HepG2 (cell line): ENCODE measurements at regions of chr3 and their contacts with region 1.

Region 1: GRCh38 chr3:182212479-182213076 is 500.9 kb downstream of the SOX2 start:
- DNase-seq: peak; percentile 96
- ATAC-seq: peak; percentile 98
- H3K4me3 ChIP-seq: no peak overlapping the region
- H3K27ac ChIP-seq: peak overlapping the region; percentile 48
- H3K4me1 ChIP-seq: peaks cover 54% of the 10 kb centered on the region
- H3K27me3 ChIP-seq: no peaks in the 10 kb centered on the region
- CTCF ChIP-seq: no peak
- EP300 ChIP-seq: peak in 1 of 2 experiments; percentile 82; a peak in 1 of 4 replicates
- POLR2A ChIP-seq: no peak
- RAD21 ChIP-seq: no peak

Region 2: GRCh38 chr3:182182531-182182968 is 30.0 kb before region 1 on chr3:
- CTCF ChIA-PET with region 1: no interaction called
- POLR2A ChIA-PET with region 1: no interaction called
- in situ Hi-C with region 1: no loop called
- intact Hi-C with region 1: no loop called
- DNase-seq: peak; percentile 7
- ATAC-seq: no peak
- H3K4me3 ChIP-seq: no peak overlapping the region
- H3K27ac ChIP-seq: no peak overlapping the region
- H3K4me1 ChIP-seq: peaks cover 7% of the 10 kb centered on the region; the same call in 1 of the 2 replicates
- H3K27me3 ChIP-seq: no peaks in the 10 kb centered on the region
- CTCF ChIP-seq: no peak
- EP300 ChIP-seq: no peak
- POLR2A ChIP-seq: no peak
- RAD21 ChIP-seq: no peak

Region 3: GRCh38 chr3:182241766-182242488 is 29.3 kb after region 1 on chr3:
- CTCF ChIA-PET with region 1: no interaction called
- POLR2A ChIA-PET with region 1: interaction called, 4 read pairs
- in situ Hi-C with region 1: no loop called
- intact Hi-C with region 1: loop called (anchors 1 kb)
- DNase-seq: peak; percentile 9
- ATAC-seq: no peak
- H3K4me3 ChIP-seq: no peak overlapping the region
- H3K27ac ChIP-seq: no peak overlapping the region
- H3K4me1 ChIP-seq: peaks cover 43% of the 10 kb centered on the region
- H3K27me3 ChIP-seq: no peaks in the 10 kb centered on the region
- CTCF ChIP-seq: no peak
- EP300 ChIP-seq: no peak
- POLR2A ChIP-seq: no peak
- RAD21 ChIP-seq: no peak